HepG2 (cell line): ENCODE measurements at regions of chr10 and their contacts with region 1.

Region 1: GRCh38 chr10:28492116-28492920 is 40.6 kb upstream of the WAC start:
- DNase-seq: no peak
- ATAC-seq: no peak
- H3K4me3 ChIP-seq: no peak overlapping the region
- H3K27ac ChIP-seq: no peak overlapping the region
- H3K4me1 ChIP-seq: peaks cover 11% of the 10 kb centered on the region
- H3K27me3 ChIP-seq: peaks cover 1 to 10% of the 10 kb centered on the region in 2 experiments; a peak in 1 of 5 replicates
- CTCF ChIP-seq: no peak
- EP300 ChIP-seq: no peak
- POLR2A ChIP-seq: no peak
- RAD21 ChIP-seq: no peak

Region 2: DNA sequence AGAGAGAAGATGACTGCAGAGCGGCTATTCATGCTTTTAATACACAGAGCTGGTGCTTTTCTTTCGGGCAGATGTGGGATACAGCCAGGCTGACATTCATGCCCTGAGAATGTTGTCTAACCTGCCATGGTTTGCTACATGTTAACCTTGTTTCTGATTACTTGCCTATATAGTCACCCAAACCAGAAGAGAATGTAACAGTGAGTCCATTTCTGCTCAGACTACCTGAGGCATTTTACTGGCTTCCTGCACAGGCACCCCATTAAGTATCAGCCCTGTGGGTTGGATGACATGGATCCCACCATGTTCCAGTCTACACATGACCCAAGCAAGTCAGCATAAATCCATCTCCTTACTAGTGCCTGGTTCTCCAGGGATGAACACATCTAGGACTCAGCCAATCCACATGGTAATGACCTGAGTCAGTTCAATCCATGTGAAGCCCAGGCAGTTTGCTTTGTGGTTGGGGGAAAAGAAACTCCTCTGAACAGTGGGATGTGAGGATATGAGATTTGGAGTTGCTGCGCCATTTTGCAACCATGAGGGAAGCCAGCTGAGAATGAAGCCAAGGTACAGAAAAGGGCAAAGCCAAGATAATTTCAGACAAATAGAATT is 691.0 kb before region 1 on chr10:
- CTCF ChIA-PET with region 1: no interaction called
- POLR2A ChIA-PET with region 1: no interaction called
- in situ Hi-C with region 1: no loop called
- intact Hi-C with region 1: loop called (anchors 10 kb)
- DNase-seq: no peak
- ATAC-seq: no peak
- H3K4me3 ChIP-seq: no peak overlapping the region
- H3K27ac ChIP-seq: no peak overlapping the region
- H3K4me1 ChIP-seq: no peaks in the 10 kb centered on the region
- H3K27me3 ChIP-seq: peaks cover 0 to 6% of the 10 kb centered on the region in 2 experiments; a peak in 1 of 5 replicates
- CTCF ChIP-seq: no peak
- EP300 ChIP-seq: no peak
- POLR2A ChIP-seq: no peak
- RAD21 ChIP-seq: no peak